ENCODE measurements at regions of chr6 and their contacts with region 1.

Region 1: DNA sequence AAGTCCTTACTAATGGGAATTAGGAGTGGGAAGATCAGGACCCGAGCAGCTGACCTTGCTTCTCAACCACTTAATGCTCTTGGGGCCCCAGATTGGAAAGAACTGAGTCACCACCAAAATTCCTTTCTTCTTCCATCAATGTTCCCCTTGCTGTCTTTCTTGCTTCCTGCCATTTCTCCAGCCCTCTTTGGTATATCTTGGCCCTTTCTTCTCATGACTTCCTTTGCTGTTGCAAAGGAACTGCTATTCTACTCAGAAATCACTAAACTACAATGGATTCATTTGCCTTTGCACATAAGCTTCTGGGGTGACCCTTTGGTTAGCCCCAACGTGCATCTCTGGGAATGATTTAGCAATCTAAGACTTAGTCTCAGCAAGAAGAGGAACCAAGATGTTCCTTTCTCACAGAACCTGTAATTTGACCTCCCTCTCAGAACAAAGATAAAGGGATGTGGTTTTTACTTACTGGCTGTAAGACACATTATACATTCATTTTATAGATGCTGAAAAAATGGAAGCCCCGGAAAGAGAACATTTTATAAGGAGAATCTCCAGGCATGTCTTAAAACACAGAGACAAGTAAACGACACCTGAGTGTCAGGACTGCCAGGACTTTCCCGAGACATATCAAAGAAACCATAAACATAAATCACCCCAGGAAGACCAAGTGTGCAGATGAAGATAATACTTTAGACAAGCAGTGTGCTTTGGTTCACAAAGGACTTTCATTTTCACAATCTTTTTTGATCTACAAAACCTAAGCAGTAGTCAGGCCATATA is 99.0 kb upstream of the TNFAIP3 start:
- DNase-seq: peak in 6 of 9 donors; percentile 25 to 49 (median 38)
- ATAC-seq: peak; percentile 81
- H3K4me3 ChIP-seq: no peak overlapping the region
- H3K4me3 Mint-ChIP-seq: peak overlapping the region; percentile 46 to 87 (median 72)
- H3K27ac ChIP-seq: peak overlapping the region; percentile 62
- H3K27ac Mint-ChIP-seq: peak overlapping the region; percentile 83 to 97 (median 93)
- H3K4me1 ChIP-seq: peaks cover 10 to 15% of the 10 kb centered on the region in 2 donors
- H3K4me1 Mint-ChIP-seq: peaks cover 10 to 28% (median 23%) of the 10 kb centered on the region in 7 donors
- H3K27me3 ChIP-seq: no peaks in the 10 kb centered on the region
- H3K27me3 Mint-ChIP-seq: no peaks in the 10 kb centered on the region

Region 2: DNA sequence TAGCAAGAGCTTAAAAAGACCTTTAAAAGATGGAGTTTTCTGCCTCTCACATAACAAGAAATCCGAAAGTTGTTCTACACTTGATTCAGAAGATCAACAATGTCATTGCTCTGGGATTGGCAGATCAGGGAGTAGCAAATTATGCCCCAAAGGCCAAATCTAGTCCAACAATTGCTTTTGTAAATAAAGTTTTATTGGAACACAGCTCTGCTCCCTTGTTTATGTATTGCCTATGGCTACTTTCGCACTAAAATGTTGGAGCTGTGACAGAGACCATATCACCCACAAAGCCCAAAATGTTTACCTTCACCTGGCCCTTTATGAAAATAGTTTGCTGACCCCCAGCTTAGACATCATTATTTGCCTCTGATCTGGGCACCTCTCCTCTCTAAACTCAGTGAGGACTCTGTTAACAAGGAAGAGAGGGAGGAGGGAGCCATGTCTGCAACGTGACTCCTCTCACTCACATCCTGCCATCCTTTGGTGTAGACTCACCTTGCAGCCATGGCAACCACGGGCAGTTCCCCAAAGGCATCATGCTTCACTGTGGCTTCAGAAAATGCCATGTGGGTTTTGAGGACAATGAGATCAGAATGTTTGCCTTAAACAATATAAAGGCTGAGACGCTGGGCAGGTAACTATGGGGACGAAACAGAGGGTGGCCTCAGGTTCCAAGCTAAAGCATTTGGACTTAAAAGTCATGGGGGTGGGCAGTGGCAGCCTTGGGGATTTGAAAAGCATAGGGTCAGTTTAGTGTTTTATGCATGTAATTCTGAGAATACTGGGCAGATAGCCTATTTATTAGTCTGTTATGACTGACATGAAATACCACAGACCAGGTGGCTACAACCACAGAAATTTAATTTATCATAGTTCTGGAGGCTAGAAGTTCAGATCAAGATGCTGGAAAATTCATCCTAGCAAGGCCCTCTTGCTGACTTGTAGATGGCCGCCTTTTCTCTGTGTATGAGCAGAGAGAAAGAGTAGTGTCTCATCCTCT is 50.7 kb before region 1 on chr6:
- CTCF ChIA-PET with region 1: no interaction called
- POLR2A ChIA-PET with region 1: no interaction called
- intact Hi-C with region 1: loop called (anchors 2 kb)
- DNase-seq: peak; percentile 44 to 85 (median 76)
- ATAC-seq: peak; percentile 74
- H3K4me3 ChIP-seq: no peak overlapping the region
- H3K4me3 Mint-ChIP-seq: peak overlapping the region in 8 of 10 donors; percentile 1 to 76 (median 23)
- H3K27ac ChIP-seq: peak overlapping the region; percentile 65
- H3K27ac Mint-ChIP-seq: peak overlapping the region; percentile 56 to 96 (median 93)
- H3K4me1 ChIP-seq: peaks cover 17 to 36% of the 10 kb centered on the region in 2 donors
- H3K4me1 Mint-ChIP-seq: peaks cover 23 to 65% (median 40%) of the 10 kb centered on the region in 7 donors
- H3K27me3 ChIP-seq: no peaks in the 10 kb centered on the region
- H3K27me3 Mint-ChIP-seq: no peaks in the 10 kb centered on the region

Region 3: DNA sequence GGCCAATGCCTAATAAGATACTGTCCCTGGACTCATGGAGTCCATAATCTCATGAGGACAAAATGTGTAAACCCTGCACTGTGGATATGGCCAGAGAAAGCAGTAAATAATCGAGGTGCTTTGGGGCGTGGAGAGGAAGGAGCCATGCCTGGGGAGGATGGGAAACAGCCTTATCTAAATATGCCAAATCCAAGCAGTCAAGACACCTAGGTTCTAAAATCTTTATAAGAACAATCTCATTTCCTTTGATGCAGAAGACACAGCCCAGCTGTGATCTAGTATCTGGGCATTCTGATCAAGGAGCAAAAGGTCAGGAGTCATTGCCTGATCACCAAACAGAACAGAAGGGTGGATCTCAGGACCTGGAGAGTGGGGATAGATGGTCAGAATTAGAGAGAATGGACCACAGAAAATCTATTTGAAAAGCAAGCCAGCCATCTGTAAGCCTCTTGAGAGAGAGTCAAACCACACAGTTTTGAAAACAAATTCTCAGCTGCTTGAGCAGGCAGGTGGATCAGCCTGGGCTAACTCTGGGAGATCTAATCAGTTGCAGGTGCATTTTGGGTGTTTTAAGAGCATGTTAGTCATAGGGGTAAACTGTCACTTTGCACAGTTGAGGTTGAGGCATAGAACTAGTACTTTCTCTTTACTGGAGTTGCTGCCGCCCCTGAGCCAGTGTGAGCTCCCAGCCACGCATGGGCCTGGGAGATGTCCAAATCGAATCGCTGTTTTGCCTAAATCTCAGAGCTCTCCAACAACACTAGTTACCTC is 31.9 kb before region 1 on chr6:
- CTCF ChIA-PET with region 1: no interaction called
- POLR2A ChIA-PET with region 1: no interaction called
- intact Hi-C with region 1: loop called in 1 of 2 experiments (anchors 2 kb)
- DNase-seq: peak in 4 of 9 donors; percentile 18 to 27 (median 24)
- ATAC-seq: peak; percentile 70
- H3K4me3 ChIP-seq: no peak overlapping the region
- H3K4me3 Mint-ChIP-seq: peak overlapping the region in 2 of 10 donors; percentile 33 to 46
- H3K27ac ChIP-seq: no peak overlapping the region
- H3K27ac Mint-ChIP-seq: peak overlapping the region in 8 of 9 donors; percentile 20 to 91 (median 78)
- H3K4me1 ChIP-seq: peaks cover 3 to 7% of the 10 kb centered on the region in 2 donors
- H3K4me1 Mint-ChIP-seq: peaks cover 6 to 27% (median 9%) of the 10 kb centered on the region in 7 donors
- H3K27me3 ChIP-seq: no peaks in the 10 kb centered on the region
- H3K27me3 Mint-ChIP-seq: peaks cover 0 to 12% (median 2%) of the 10 kb centered on the region in 5 donors

Region 4: DNA sequence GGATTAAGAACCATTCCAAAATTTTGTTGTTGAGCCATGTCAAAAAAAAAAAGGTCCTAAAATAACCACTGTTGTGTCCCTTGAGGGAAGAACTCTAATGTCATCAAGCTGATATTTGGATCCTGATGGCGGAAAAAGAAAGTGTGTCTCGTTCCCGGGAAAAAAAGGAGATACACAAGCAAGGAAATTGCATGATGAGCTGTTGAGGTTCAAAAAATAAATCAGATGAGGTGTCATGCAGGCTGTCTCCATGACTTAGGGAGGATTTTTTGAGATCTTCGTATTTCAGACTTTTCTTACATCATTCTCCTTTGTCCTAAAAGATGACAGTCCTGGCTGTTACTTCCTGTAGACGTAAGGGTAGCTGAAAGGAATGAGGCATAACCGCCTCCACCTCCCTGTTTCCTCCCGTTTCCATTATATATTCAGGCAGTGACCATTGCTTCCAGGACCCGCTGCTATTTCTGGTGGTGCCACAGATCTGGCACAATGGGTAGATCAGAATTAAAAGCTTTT is 18.3 kb before region 1 on chr6:
- CTCF ChIA-PET with region 1: no interaction called
- POLR2A ChIA-PET with region 1: no interaction called
- intact Hi-C with region 1: loop called in 1 of 2 experiments (anchors 2 kb)
- DNase-seq: no peak
- ATAC-seq: no peak
- H3K4me3 ChIP-seq: no peak overlapping the region
- H3K4me3 Mint-ChIP-seq: no peak overlapping the region
- H3K27ac ChIP-seq: no peak overlapping the region
- H3K27ac Mint-ChIP-seq: no peak overlapping the region
- H3K4me1 ChIP-seq: no peaks in the 10 kb centered on the region
- H3K4me1 Mint-ChIP-seq: peaks cover 0 to 28% (median under 1%) of the 10 kb centered on the region in 7 donors
- H3K27me3 ChIP-seq: no peaks in the 10 kb centered on the region
- H3K27me3 Mint-ChIP-seq: peaks cover 0 to 14% (median 4%) of the 10 kb centered on the region in 5 donors

Region 5: GRCh38 chr6:137791281-137792159 is 23.4 kb after region 1 on chr6:
- CTCF ChIA-PET with region 1: no interaction called
- POLR2A ChIA-PET with region 1: interaction called, 3 read pairs
- intact Hi-C with region 1: loop called in 1 of 2 experiments (anchors 2 kb)
- DNase-seq: peak in 1 of 9 donors; percentile 26
- ATAC-seq: no peak
- H3K4me3 ChIP-seq: no peak overlapping the region
- H3K4me3 Mint-ChIP-seq: peak overlapping the region in 1 of 10 donors; percentile 45
- H3K27ac ChIP-seq: no peak overlapping the region
- H3K27ac Mint-ChIP-seq: peak overlapping the region in 8 of 9 donors; percentile 1 to 79 (median 36)
- H3K4me1 ChIP-seq: peaks cover 7 to 28% of the 10 kb centered on the region in 2 donors
- H3K4me1 Mint-ChIP-seq: peaks cover 27 to 65% (median 50%) of the 10 kb centered on the region in 7 donors
- H3K27me3 ChIP-seq: no peaks in the 10 kb centered on the region
- H3K27me3 Mint-ChIP-seq: no peaks in the 10 kb centered on the region

Measured in naive thymus-derived CD4-positive, alpha-beta T cell (primary cell).